Mammary epithelial cell (primary cell): ENCODE measurements at regions of chr14 and their contacts with region 1.

Region 1: GRCh38 chr14:100761481-100761880 is 34.8 kb downstream of the DLK1 start:
- DNase-seq: peak; percentile 73
- H3K4me3 ChIP-seq: no peak overlapping the region
- H3K27ac ChIP-seq: no peak overlapping the region
- H3K4me1 ChIP-seq: no peaks in the 10 kb centered on the region
- H3K27me3 ChIP-seq: no peaks in the 10 kb centered on the region
- CTCF ChIP-seq: no peak

Region 2: GRCh38 chr14:100709289-100710284 is 51.9 kb before region 1 on chr14:
- CTCF ChIA-PET with region 1: no interaction called
- dilution Hi-C with region 1: loop called (anchors 5 kb)
- in situ Hi-C with region 1: no loop called
- intact Hi-C with region 1: no loop called
- DNase-seq: no peak
- H3K4me3 ChIP-seq: no peak overlapping the region
- H3K27ac ChIP-seq: no peak overlapping the region
- H3K4me1 ChIP-seq: peaks cover 13% of the 10 kb centered on the region
- H3K27me3 ChIP-seq: no peaks in the 10 kb centered on the region
- CTCF ChIP-seq: peak in 1 of 2 donors; percentile 28

Region 3: DNA sequence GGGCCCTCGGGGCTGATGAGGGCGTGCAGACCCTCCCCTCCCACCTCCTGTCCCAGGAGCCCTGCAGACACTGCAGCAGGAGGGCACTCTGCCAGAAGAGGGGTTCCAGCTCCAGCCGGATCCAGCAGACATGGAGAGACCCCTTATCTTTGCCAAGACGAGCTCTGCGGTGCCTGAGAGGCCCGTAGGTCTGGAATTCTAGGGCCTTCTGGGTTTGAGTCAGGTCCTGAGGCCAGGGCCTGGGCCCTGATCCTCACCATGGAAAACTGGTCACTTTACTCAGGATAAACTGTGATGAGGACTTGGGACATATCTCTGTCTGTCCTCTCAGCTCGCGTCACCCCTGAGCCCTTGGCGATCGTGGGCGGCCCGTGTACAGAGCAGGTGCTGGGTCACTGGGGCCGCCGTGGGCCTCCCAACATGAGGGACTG is 78.2 kb after region 1 on chr14:
- CTCF ChIA-PET with region 1: no interaction called
- dilution Hi-C with region 1: loop called (anchors 10 kb)
- in situ Hi-C with region 1: no loop called
- intact Hi-C with region 1: no loop called
- DNase-seq: no peak
- H3K4me3 ChIP-seq: no peak overlapping the region
- H3K27ac ChIP-seq: no peak overlapping the region
- H3K4me1 ChIP-seq: no peaks in the 10 kb centered on the region
- H3K27me3 ChIP-seq: no peaks in the 10 kb centered on the region
- CTCF ChIP-seq: no peak